CD8-positive, alpha-beta T cell (primary cell): ENCODE measurements at regions of chr2 and their contacts with region 1.

Region 1: GRCh38 chr2:28751252-28751955 is at the start of gene PPP1CB:
- DNase-seq: peak; percentile 93 to 100 (median 95)
- ATAC-seq: peak; percentile 85
- H3K4me3 ChIP-seq: peak within 1 kb of the TSS; percentile 63 to 88
- H3K4me3 Mint-ChIP-seq: peak within 1 kb of the TSS; percentile 93
- H3K27ac ChIP-seq: peak within 1 kb of the TSS; percentile 86 to 97
- H3K27ac Mint-ChIP-seq: peak within 1 kb of the TSS; percentile 96
- H3K4me1 ChIP-seq: peaks cover 46% of the 10 kb centered on the region
- H3K4me1 Mint-ChIP-seq: peaks cover 65% of the 10 kb centered on the region
- H3K27me3 ChIP-seq: no peaks in the 10 kb centered on the region
- H3K27me3 Mint-ChIP-seq: no peaks in the 10 kb centered on the region
- CTCF ChIP-seq: no peak
- total RNA-seq, gene PPP1CB: 331 to 334 TPM

Region 2: DNA sequence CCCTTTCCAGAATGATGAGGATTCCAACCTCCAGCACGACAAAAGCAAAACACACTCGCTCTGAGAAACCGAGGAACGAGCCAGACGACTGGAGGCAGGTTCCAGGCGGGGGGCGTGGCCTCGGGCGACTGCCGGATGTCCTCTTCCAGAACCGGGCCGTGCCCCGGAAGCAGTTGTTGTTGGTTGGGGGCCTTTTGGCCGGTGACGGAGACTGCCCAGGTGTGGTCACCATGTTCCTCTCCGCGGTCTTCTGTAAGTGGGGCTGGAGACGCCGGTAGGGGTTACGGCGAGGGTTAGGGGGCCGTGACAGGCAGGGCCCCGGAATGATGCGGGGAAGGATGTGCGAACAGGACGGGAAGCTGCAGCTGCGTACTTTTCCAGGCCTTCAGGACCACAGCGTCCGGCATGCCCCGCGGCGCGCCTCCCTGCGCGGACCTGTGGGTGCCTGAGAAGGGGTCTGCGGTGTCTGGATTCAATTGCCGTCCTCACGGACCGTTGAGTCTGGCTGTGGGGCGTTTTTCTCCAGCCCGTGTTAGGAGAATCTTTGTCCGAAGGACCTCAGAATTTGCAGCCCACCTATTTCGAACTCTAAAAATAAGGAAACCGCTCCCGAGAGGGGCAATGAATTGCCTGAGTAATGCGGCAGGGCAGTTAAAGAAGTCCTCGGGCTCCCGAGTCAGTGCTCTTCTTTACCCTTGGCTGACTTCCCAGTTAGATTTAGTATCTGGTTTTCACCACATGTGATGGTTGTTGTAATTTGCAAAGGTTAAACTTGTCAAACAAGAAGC is 979.7 kb before region 1 on chr2 and contains the start of gene MRPL33:
- CTCF ChIA-PET with region 1: no interaction called
- POLR2A ChIA-PET with region 1: no interaction called
- intact Hi-C with region 1: loop called in 1 of 2 experiments (anchors 5 kb)
- DNase-seq: peak; percentile 82 to 94 (median 92)
- ATAC-seq: peak; percentile 89
- H3K4me3 ChIP-seq: peak within 1 kb of the TSS; percentile 93 to 99
- H3K4me3 Mint-ChIP-seq: peak within 1 kb of the TSS; percentile 100
- H3K27ac ChIP-seq: peak within 1 kb of the TSS; percentile 93 to 96
- H3K27ac Mint-ChIP-seq: peak within 1 kb of the TSS; percentile 100
- H3K4me1 ChIP-seq: peaks cover 27% of the 10 kb centered on the region
- H3K4me1 Mint-ChIP-seq: peaks cover 51% of the 10 kb centered on the region
- H3K27me3 ChIP-seq: no peaks in the 10 kb centered on the region
- H3K27me3 Mint-ChIP-seq: peaks cover 4% of the 10 kb centered on the region
- CTCF ChIP-seq: no peak
- total RNA-seq, gene MRPL33: 35.8 to 39.0 TPM

Region 3: GRCh38 chr2:28621172-28622100 is 130.0 kb before region 1 on chr2:
- CTCF ChIA-PET with region 1: no interaction called
- POLR2A ChIA-PET with region 1: interaction called, 8 read pairs
- intact Hi-C with region 1: loop called (anchors 1 kb)
- DNase-seq: peak; percentile 60 to 96 (median 78)
- ATAC-seq: peak; percentile 85
- H3K4me3 ChIP-seq: peak overlapping the region; percentile 19 to 33
- H3K4me3 Mint-ChIP-seq: peak overlapping the region; percentile 68
- H3K27ac ChIP-seq: peak overlapping the region; percentile 86 to 98
- H3K27ac Mint-ChIP-seq: peak overlapping the region; percentile 99
- H3K4me1 ChIP-seq: peaks cover 87% of the 10 kb centered on the region
- H3K4me1 Mint-ChIP-seq: peaks cover 92% of the 10 kb centered on the region
- H3K27me3 ChIP-seq: no peaks in the 10 kb centered on the region
- H3K27me3 Mint-ChIP-seq: no peaks in the 10 kb centered on the region
- CTCF ChIP-seq: no peak

Region 4: GRCh38 chr2:28810384-28811285 is 59.2 kb after region 1 on chr2 and contains the start of gene SPDYA:
- CTCF ChIA-PET with region 1: interaction called, 4 read pairs
- POLR2A ChIA-PET with region 1: no interaction called
- intact Hi-C with region 1: loop called in 1 of 2 experiments (anchors 2 kb)
- DNase-seq: peak; percentile 52 to 89 (median 76)
- ATAC-seq: peak; percentile 92
- H3K4me3 ChIP-seq: peak within 1 kb of the TSS; percentile 62 to 69
- H3K4me3 Mint-ChIP-seq: peak within 1 kb of the TSS; percentile 86
- H3K27ac ChIP-seq: peak within 1 kb of the TSS; percentile 24 to 69
- H3K27ac Mint-ChIP-seq: no peak within 1 kb of the TSS
- H3K4me1 ChIP-seq: peaks cover 6% of the 10 kb centered on the region
- H3K4me1 Mint-ChIP-seq: peaks cover 18% of the 10 kb centered on the region
- H3K27me3 ChIP-seq: no peaks in the 10 kb centered on the region
- H3K27me3 Mint-ChIP-seq: no peaks in the 10 kb centered on the region
- CTCF ChIP-seq: no peak
- total RNA-seq, gene SPDYA: 11.8 to 12.4 TPM

Region 5: GRCh38 chr2:28894470-28895177 is 143.2 kb after region 1 on chr2 and contains the start of gene WDR43:
- CTCF ChIA-PET with region 1: no interaction called
- POLR2A ChIA-PET with region 1: interaction called, 5 read pairs
- intact Hi-C with region 1: loop called (anchors 5 to 10 kb)
- DNase-seq: peak; percentile 94 to 99 (median 98)
- ATAC-seq: peak; percentile 98
- H3K4me3 ChIP-seq: peak within 1 kb of the TSS; percentile 81 to 89
- H3K4me3 Mint-ChIP-seq: peak within 1 kb of the TSS; percentile 96
- H3K27ac ChIP-seq: peak within 1 kb of the TSS; percentile 68 to 81
- H3K27ac Mint-ChIP-seq: peak within 1 kb of the TSS; percentile 92
- H3K4me1 ChIP-seq: peaks cover 37% of the 10 kb centered on the region
- H3K4me1 Mint-ChIP-seq: peaks cover 44% of the 10 kb centered on the region
- H3K27me3 ChIP-seq: no peaks in the 10 kb centered on the region
- H3K27me3 Mint-ChIP-seq: no peaks in the 10 kb centered on the region
- CTCF ChIP-seq: no peak
- total RNA-seq, gene WDR43: 89.2 to 90.0 TPM